ENCODE measurements at regions of chr4 and their contacts with region 1.

Region 1: GRCh38 chr4:185640811-185641675 is 105.7 kb upstream of the PDLIM3 start:
- DNase-seq: peak; percentile 41
- H3K4me3 ChIP-seq: no peak overlapping the region
- H3K27ac ChIP-seq: no peak overlapping the region
- H3K27me3 ChIP-seq: peaks cover 21% of the 10 kb centered on the region
- CTCF ChIP-seq: peak; percentile 51

Region 2: DNA sequence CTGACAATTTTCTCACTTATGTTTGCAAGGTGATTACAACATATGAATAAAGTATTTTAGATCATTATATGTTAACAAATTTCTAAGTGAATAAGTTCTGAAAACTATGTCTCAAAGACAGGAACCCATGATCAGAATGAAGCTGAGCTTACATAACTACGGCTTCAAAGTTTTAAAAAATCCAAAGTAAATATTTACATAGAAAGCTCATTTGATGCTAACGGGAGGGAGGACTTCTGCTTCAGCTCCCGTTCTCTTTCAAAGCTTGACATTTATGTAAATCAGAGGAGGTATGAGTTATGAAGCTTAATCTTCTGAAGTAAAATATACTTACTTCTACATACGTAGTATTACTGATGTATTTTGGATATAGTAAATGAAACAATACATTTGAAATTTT is 32.9 kb before region 1 on chr4:
- CTCF ChIA-PET with region 1: interaction called, 10 read pairs
- POLR2A ChIA-PET with region 1: no interaction called
- DNase-seq: no peak
- H3K4me3 ChIP-seq: no peak overlapping the region
- H3K27ac ChIP-seq: no peak overlapping the region
- H3K27me3 ChIP-seq: no peaks in the 10 kb centered on the region
- CTCF ChIP-seq: no peak

Region 3: GRCh38 chr4:185654306-185654987 is 13.4 kb after region 1 on chr4:
- CTCF ChIA-PET with region 1: interaction called, 15 read pairs
- POLR2A ChIA-PET with region 1: no interaction called
- DNase-seq: no peak
- H3K4me3 ChIP-seq: no peak overlapping the region
- H3K27ac ChIP-seq: no peak overlapping the region
- H3K27me3 ChIP-seq: no peaks in the 10 kb centered on the region
- CTCF ChIP-seq: no peak

Region 4: GRCh38 chr4:186021461-186022167 is 380.6 kb after region 1 on chr4:
- CTCF ChIA-PET with region 1: interaction called, 127 read pairs
- POLR2A ChIA-PET with region 1: no interaction called
- DNase-seq: no peak
- H3K4me3 ChIP-seq: no peak overlapping the region
- H3K27ac ChIP-seq: no peak overlapping the region
- H3K27me3 ChIP-seq: no peaks in the 10 kb centered on the region
- CTCF ChIP-seq: peak; percentile 86

Measured in AG04450 (cell line).